ENCODE measurements at regions of chr2 and their contacts with region 1.

Region 1: GRCh38 chr2:72993147-72993932 is 76.0 kb downstream of the EMX1 start:
- DNase-seq: no peak
- H3K4me3 ChIP-seq: no peak overlapping the region
- H3K27ac ChIP-seq: no peak overlapping the region
- H3K4me1 ChIP-seq: peaks cover 0 to 5% (median 0%) of the 10 kb centered on the region in 4 donors
- H3K27me3 ChIP-seq: no peaks in the 10 kb centered on the region
- CTCF ChIP-seq: peak; percentile 69 to 84 (median 77)
- EP300 ChIP-seq: no peak
- POLR2A ChIP-seq: no peak

Region 2: DNA sequence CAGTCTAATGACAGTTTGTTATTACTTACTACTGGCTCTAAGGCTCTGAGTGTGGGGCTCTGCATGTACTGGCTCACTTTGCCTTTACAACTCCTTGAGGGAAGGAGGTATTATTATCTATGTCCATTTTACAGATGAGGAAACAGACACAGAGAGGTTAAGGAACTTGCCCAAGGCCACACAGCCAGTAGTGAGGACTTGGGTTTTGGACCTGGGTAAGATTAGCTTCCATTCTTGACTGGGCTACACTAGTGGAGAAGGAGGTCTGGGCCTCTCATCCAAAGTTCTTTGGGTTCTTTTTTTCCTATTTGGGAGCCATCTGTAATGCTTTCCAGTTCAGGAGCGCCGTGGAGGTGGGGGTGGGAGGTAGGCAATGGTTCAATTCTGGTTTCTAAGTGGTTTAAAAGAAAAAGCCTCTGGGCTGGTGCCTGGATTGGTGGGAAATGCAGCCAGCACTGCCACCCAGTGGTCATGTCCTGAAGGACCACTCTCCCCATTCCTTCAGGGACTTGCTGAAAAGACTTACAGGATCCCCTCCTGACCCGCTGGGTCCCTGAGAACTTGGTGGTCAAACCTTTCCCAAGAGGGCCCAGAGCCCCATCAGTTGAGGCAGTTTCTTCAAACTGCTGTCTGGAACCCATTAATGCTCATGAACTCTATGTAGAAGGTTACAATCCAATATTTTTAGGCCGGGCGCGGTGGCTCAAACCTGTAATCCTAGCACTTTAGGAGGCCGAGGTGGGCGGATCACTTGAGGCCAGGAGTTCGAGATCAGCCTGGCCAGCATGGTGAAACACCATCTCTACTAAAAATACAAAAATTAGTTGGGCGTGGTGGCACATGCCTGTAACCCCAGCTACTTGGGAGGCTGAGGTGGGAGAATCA is 170.4 kb after region 1 on chr2:
- intact Hi-C with region 1: loop called (anchors 2 kb)
- DNase-seq: peak; percentile 92
- H3K4me3 ChIP-seq: no peak overlapping the region
- H3K27ac ChIP-seq: no peak overlapping the region
- H3K4me1 ChIP-seq: no peaks in the 10 kb centered on the region
- H3K27me3 ChIP-seq: peaks cover 0 to 32% (median 0%) of the 10 kb centered on the region in 4 donors
- CTCF ChIP-seq: peak; percentile 76 to 95 (median 86)
- EP300 ChIP-seq: no peak
- POLR2A ChIP-seq: no peak